IMR-90 (cell line): ENCODE measurements at regions of chr14 and their contacts with region 1.

Region 1: DNA sequence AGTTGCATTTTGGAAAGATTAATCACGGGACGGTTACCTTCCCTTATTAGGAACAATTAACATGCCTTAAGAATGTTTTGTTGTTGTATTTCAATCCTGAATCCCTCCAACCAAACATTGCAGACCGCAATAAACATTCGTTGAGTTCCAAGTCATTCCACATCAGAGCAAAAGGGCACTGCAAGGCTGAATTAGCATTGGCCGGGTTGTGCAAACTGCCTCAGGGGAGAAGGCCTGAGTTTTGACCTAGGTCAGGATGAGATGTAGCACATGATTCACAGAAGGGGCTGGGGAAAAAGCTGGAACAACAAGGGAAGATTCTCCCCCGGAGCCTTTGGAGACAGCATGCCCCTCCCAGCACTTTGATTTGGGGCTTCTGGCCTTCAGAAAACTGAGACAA is 82.1 kb upstream of the BDKRB2 start:
- DNase-seq: peak; percentile 90
- ATAC-seq: peak; percentile 82
- H3K4me3 ChIP-seq: no peak overlapping the region
- H3K27ac ChIP-seq: peak overlapping the region; percentile 95
- H3K4me1 ChIP-seq: peaks cover 29% of the 10 kb centered on the region
- H3K27me3 ChIP-seq: no peaks in the 10 kb centered on the region
- CTCF ChIP-seq: no peak
- POLR2A ChIP-seq: no peak
- RAD21 ChIP-seq: 0 out of 2 replicates have a peak, but pooled peaks have one; percentile 9

Region 2: DNA sequence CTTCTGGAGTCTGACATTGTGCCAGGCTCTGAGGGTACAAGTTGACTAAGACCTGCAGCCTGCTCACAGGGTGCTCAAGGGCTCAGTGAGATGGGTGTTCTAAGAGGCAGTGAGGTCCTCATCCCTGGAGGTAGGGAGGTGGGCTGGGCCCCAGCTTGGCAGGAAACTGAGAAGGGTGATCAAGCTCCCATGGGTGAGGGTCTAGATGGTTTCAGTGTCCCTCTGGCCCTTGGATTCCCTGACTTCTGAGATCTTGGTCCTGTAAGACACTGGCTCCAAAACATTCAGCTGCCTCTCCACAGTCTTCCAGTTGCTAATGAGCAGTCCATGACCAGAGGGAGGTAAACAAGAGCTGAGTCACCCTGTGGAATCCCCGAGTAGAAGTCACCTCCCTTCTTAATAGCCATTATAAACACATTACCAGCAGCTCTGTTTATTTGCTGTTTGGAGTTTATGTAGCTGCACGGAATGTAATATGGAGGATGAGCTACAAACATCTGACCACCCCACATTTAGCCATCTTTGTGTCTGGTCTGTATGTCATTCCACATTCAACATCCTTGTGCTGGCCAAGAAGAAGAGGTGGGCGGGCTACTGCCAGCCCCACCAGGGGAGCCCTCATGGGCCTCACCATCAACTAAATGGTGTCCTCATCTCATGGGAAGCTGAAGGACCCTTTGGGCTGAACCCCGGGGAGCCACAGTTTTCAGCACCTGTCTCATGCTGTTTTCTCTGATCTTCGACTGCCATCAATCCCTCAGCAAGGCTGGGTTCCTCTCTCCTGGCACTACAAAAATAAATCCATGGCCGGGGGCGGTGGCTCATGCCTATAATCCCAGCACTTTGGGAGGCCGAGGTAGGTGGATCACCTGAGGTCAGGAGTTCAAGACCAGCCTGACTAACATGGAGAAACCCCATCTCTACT is 45.0 kb after region 1 on chr14:
- CTCF ChIA-PET with region 1: no interaction called
- POLR2A ChIA-PET with region 1: no interaction called
- dilution Hi-C with region 1: no loop called
- in situ Hi-C with region 1: no loop called
- intact Hi-C with region 1: loop called (anchors 5 kb)
- DNase-seq: peak; percentile 95
- ATAC-seq: peak; percentile 96
- H3K4me3 ChIP-seq: no peak overlapping the region
- H3K27ac ChIP-seq: peak overlapping the region; percentile 95
- H3K4me1 ChIP-seq: peaks cover 29% of the 10 kb centered on the region
- H3K27me3 ChIP-seq: no peaks in the 10 kb centered on the region
- CTCF ChIP-seq: no peak
- POLR2A ChIP-seq: peak; percentile 38; the same call in 1 of the 2 replicates
- RAD21 ChIP-seq: peak; percentile 21; the same call in 1 of the 2 replicates

Region 3: GRCh38 chr14:96268431-96269358 is 146.2 kb after region 1 on chr14:
- CTCF ChIA-PET with region 1: interaction called, 4 read pairs
- POLR2A ChIA-PET with region 1: no interaction called
- dilution Hi-C with region 1: no loop called
- in situ Hi-C with region 1: no loop called
- intact Hi-C with region 1: loop called (anchors 5 kb)
- DNase-seq: peak; percentile 99
- ATAC-seq: peak; percentile 76
- H3K4me3 ChIP-seq: no peak overlapping the region
- H3K27ac ChIP-seq: peak overlapping the region; percentile 75
- H3K4me1 ChIP-seq: peaks cover 38% of the 10 kb centered on the region
- H3K27me3 ChIP-seq: no peaks in the 10 kb centered on the region
- CTCF ChIP-seq: no peak
- POLR2A ChIP-seq: 0 out of 2 replicates have a peak, but pooled peaks have one; percentile 7
- RAD21 ChIP-seq: peak; percentile 29; the same call in 1 of the 2 replicates